PC-9 (cell line): ENCODE measurements at regions of chr2 and their contacts with region 1.

Region 1: DNA sequence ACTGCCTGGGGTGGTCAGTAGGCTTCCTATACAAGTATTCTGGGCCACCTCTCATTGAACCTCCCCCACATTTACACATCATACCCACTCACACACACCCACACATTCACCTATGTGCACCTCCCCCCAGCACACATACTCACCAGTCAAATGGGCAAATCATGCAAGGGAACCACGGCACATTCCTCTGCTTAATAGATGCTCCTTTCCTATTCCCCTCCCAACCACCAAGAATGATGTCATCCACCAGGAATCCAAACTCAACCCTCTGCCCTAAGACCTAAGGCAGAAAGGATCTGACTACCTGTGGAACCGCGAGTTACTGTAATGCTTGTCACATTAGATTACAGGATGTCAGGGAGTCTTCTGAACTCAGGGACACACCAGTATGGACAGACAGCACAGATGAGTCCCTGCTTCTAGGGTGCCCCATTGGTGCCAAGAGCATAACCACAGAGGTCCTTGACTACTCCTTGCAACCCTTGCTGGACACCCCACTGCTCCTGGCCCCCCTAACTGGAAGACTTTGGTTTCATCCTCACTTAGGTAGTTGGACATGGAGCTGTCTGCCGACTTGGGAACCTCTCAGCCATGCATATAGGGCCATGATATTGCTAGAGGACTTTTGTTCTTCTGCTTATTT is 21.5 kb upstream of the CAB39 start:
- DNase-seq: peak; percentile 83 to 99
- H3K4me3 ChIP-seq: no peak overlapping the region
- H3K27ac ChIP-seq: peak overlapping the region; percentile 84
- H3K4me1 ChIP-seq: peaks cover 97% of the 10 kb centered on the region
- H3K27me3 ChIP-seq: no peaks in the 10 kb centered on the region
- CTCF ChIP-seq: no peak

Region 2: DNA sequence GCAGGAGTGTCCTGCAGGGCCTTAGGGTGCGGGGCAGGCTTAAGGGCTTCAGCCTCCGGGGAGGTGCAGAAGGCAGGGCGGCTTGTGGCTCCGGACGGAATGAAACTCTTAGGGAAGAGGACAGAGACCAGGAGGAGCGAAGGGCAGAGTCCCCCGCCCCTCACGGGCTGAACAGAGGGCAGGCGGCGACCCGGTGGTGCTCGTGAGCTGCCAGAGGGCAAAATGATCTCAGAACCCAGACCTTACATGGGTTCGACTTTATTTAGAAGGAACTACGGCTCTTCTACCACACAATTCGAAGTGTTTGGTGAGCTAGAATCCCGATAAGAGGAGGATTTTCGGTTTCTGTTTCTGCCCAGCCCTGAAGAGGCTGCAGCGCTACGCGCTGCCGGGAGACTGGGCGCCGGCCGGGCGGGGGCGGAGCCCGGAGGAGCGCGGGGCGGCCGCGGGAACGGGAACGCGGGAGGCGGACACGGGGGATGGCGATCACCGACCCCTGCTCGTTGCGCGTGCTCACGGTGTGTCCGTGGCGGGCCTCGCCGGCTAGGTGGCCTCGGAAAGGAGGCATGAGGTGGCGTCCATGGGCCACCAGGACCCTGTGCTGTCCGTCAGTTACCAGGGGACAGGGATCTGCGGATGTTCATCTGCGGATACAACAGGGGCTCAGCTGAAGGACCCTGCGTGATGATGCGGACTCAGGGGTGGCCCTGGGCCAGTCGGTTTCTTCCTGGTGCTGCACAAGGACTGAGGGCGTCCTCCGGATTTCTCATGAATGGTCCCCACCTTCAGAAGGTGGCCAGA is 279.4 kb before region 1 on chr2:
- CTCF ChIA-PET with region 1: no interaction called
- POLR2A ChIA-PET with region 1: no interaction called
- intact Hi-C with region 1: loop called (anchors 2 kb)
- DNase-seq: peak in 1 of 2 experiments; percentile 55
- H3K4me3 ChIP-seq: peak overlapping the region; percentile 75
- H3K27ac ChIP-seq: no peak overlapping the region
- H3K4me1 ChIP-seq: peaks cover 11% of the 10 kb centered on the region
- H3K27me3 ChIP-seq: no peaks in the 10 kb centered on the region
- CTCF ChIP-seq: no peak

Region 3: DNA sequence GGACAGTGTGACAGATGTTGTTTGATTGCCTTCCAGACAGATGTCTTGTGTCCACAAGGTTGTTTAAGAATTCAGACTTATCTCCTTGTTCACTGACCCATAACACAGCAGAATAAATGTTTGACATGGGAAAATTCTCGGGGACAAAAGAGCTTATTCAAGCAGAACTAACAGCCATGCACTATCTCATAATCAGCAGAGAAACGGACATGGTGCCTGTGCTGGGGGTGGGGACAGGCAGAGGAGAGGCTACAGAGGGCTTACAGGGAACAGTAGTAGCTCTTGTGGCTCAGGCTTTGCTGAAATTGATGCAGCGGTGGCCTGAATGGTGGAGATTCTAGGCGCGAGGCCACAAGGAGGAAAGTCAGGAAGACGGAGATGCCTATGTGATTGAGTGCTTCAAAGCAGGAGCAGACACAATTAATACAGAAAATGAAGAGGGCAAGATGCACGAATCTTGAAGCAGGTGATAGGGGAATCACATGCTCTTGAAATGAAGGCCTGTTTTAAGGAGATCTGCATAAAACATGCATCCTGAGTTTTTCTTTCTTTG is 40.5 kb before region 1 on chr2:
- CTCF ChIA-PET with region 1: no interaction called
- POLR2A ChIA-PET with region 1: interaction called, 3 read pairs
- intact Hi-C with region 1: loop called (anchors 2 kb)
- DNase-seq: peak; percentile 56 to 71
- H3K4me3 ChIP-seq: no peak overlapping the region
- H3K27ac ChIP-seq: no peak overlapping the region
- H3K4me1 ChIP-seq: peaks cover 15% of the 10 kb centered on the region
- H3K27me3 ChIP-seq: no peaks in the 10 kb centered on the region
- CTCF ChIP-seq: no peak

Region 4: GRCh38 chr2:230712443-230713330 is 21.6 kb after region 1 on chr2 and contains the start of gene CAB39:
- CTCF ChIA-PET with region 1: interaction called, 5 read pairs
- POLR2A ChIA-PET with region 1: interaction called, 5 read pairs
- intact Hi-C with region 1: loop called (anchors 1 kb)
- DNase-seq: peak; percentile 73 to 90
- H3K4me3 ChIP-seq: peak within 1 kb of the TSS; percentile 87
- H3K27ac ChIP-seq: peak within 1 kb of the TSS; percentile 84
- H3K4me1 ChIP-seq: peaks cover 42% of the 10 kb centered on the region
- H3K27me3 ChIP-seq: no peaks in the 10 kb centered on the region
- CTCF ChIP-seq: peak; percentile 64; the same call in 1 of the 2 replicates
- total RNA-seq, gene CAB39: 70.9 and 86.1 TPM in 2 replicates

Region 5: GRCh38 chr2:230902180-230902899 is 211.2 kb after region 1 on chr2:
- CTCF ChIA-PET with region 1: no interaction called
- POLR2A ChIA-PET with region 1: no interaction called
- intact Hi-C with region 1: no loop called
- DNase-seq: peak in 1 of 2 experiments; percentile 43
- H3K4me3 ChIP-seq: no peak overlapping the region
- H3K27ac ChIP-seq: no peak overlapping the region
- H3K4me1 ChIP-seq: no peaks in the 10 kb centered on the region
- H3K27me3 ChIP-seq: peaks cover 35% of the 10 kb centered on the region
- CTCF ChIP-seq: peak; percentile 84